ENCODE measurements at regions of chr6 and their contacts with region 1.

Region 1: GRCh38 chr6:148464319-148465010 is 121.8 kb downstream of the SASH1 start:
- DNase-seq: peak; percentile 75
- ATAC-seq: peak; percentile 60
- H3K4me3 Mint-ChIP-seq: no peak overlapping the region
- H3K27ac Mint-ChIP-seq: no peak overlapping the region
- H3K4me1 Mint-ChIP-seq: peaks cover 3% of the 10 kb centered on the region
- H3K27me3 Mint-ChIP-seq: peaks cover 12% of the 10 kb centered on the region

Region 2: GRCh38 chr6:147390909-147391536 is 1073.4 kb before region 1 on chr6:
- CTCF ChIA-PET with region 1: no interaction called
- POLR2A ChIA-PET with region 1: no interaction called
- intact Hi-C with region 1: loop called in 1 of 2 experiments (anchors 5 kb)
- DNase-seq: no peak
- ATAC-seq: no peak
- H3K4me3 Mint-ChIP-seq: no peak overlapping the region
- H3K27ac Mint-ChIP-seq: no peak overlapping the region
- H3K4me1 Mint-ChIP-seq: no peaks in the 10 kb centered on the region
- H3K27me3 Mint-ChIP-seq: no peaks in the 10 kb centered on the region

Region 3: GRCh38 chr6:148177589-148178233 is 286.8 kb before region 1 on chr6:
- CTCF ChIA-PET with region 1: interaction called, 39 read pairs
- POLR2A ChIA-PET with region 1: no interaction called
- intact Hi-C with region 1: loop called (anchors 1 kb)
- DNase-seq: peak; percentile 63
- ATAC-seq: no peak
- H3K4me3 Mint-ChIP-seq: no peak overlapping the region
- H3K27ac Mint-ChIP-seq: no peak overlapping the region
- H3K4me1 Mint-ChIP-seq: no peaks in the 10 kb centered on the region
- H3K27me3 Mint-ChIP-seq: peaks cover 24% of the 10 kb centered on the region

Region 4: DNA sequence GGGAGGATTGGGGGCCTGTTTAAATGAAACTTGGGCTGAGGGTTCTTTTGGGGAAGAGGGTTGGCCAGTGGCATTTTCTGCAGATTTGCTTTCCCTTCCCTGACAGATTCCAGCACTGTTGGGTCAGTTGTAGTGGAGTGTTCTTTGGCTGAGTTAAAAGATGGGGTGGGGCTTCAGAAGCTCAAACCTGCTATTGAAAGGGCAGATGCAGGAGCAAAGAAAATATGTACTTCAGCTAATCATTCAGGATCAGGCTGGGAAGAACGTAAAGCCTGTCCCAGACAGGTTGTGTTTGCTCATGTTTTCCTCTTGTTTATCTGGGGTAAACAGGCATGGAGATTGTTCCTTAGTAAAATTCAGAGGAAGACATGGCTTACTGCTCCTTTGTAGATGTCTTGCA is 119.3 kb before region 1 on chr6:
- CTCF ChIA-PET with region 1: no interaction called
- POLR2A ChIA-PET with region 1: no interaction called
- intact Hi-C with region 1: loop called in 1 of 2 experiments (anchors 5 kb)
- DNase-seq: no peak
- ATAC-seq: no peak
- H3K4me3 Mint-ChIP-seq: no peak overlapping the region
- H3K27ac Mint-ChIP-seq: no peak overlapping the region
- H3K4me1 Mint-ChIP-seq: peaks cover 8% of the 10 kb centered on the region
- H3K27me3 Mint-ChIP-seq: peaks cover 52% of the 10 kb centered on the region

Measured in activated CD4-positive, alpha-beta T cell treated with anti-CD3 and anti-CD28 coated beads for 36 hours (primary cell).